Caco-2 (cell line): ENCODE measurements at regions of chr6 and their contacts with region 1.

Region 1: DNA sequence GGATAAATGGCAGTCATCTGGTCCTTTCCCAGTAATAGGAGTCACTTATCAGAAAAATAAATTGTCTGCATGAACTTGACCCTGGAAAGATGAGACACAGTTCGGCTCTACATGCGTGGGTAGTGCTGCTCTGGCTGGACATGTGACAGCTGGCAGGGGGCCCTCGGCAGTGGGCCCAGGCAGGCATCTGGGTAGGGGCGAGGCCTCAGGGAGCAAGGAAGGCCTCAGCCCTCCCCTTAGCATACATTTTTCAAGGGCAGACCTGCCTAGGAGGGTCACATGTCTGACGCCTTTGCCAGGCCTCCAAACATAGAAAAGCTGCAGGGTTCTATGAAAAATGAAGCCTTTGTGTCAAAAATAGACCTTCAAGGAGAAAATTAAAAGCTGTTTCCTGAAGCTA is 12.8 kb upstream of the ILRUN start:
- DNase-seq: no peak
- H3K4me3 ChIP-seq: no peak overlapping the region
- H3K4me3 Mint-ChIP-seq: no peak overlapping the region
- H3K27ac Mint-ChIP-seq: no peak overlapping the region
- H3K4me1 ChIP-seq: peaks cover 13% of the 10 kb centered on the region
- H3K4me1 Mint-ChIP-seq: peaks cover 9% of the 10 kb centered on the region
- H3K27me3 ChIP-seq: no peaks in the 10 kb centered on the region
- H3K27me3 Mint-ChIP-seq: no peaks in the 10 kb centered on the region
- CTCF ChIP-seq: no peak

Region 2: GRCh38 chr6:34680802-34681515 is 28.4 kb before region 1 on chr6:
- CTCF ChIA-PET with region 1: no interaction called
- POLR2A ChIA-PET with region 1: interaction called, 10 read pairs
- intact Hi-C with region 1: no loop called
- DNase-seq: no peak
- H3K4me3 ChIP-seq: no peak overlapping the region
- H3K4me3 Mint-ChIP-seq: no peak overlapping the region
- H3K27ac Mint-ChIP-seq: no peak overlapping the region
- H3K4me1 ChIP-seq: peaks cover 23% of the 10 kb centered on the region
- H3K4me1 Mint-ChIP-seq: peaks cover 20% of the 10 kb centered on the region
- H3K27me3 ChIP-seq: no peaks in the 10 kb centered on the region
- H3K27me3 Mint-ChIP-seq: no peaks in the 10 kb centered on the region
- CTCF ChIP-seq: no peak

Region 3: GRCh38 chr6:34829137-34829536 is 119.8 kb after region 1 on chr6:
- CTCF ChIA-PET with region 1: no interaction called
- POLR2A ChIA-PET with region 1: no interaction called
- intact Hi-C with region 1: no loop called
- DNase-seq: no peak
- H3K4me3 ChIP-seq: no peak overlapping the region
- H3K4me3 Mint-ChIP-seq: no peak overlapping the region
- H3K27ac Mint-ChIP-seq: no peak overlapping the region
- H3K4me1 ChIP-seq: no peaks in the 10 kb centered on the region
- H3K4me1 Mint-ChIP-seq: no peaks in the 10 kb centered on the region
- H3K27me3 ChIP-seq: no peaks in the 10 kb centered on the region
- H3K27me3 Mint-ChIP-seq: no peaks in the 10 kb centered on the region
- CTCF ChIP-seq: no peak

Region 4: DNA sequence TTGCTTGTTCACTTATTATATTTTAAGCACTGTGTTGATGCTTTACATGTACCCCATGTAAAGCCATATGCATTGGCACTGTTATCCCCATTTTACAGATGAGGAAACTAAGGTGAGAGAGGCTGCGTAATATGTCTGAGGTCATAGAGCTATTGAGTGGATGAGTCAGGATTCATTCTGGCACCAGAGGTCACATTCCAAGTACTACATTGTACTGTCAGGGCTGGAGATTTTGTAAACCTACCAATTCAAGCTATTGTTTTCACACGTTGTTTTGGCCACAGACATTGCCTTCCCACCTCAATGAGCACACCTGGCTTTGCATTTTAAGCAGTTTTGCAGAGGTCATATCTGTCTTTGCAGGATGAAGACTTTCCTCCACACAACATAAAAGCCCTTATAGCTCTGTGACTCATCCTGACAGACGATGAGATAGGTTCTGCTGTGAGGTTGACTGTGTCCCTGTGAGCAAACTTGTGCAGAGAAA is 212.8 kb after region 1 on chr6:
- CTCF ChIA-PET with region 1: no interaction called
- POLR2A ChIA-PET with region 1: no interaction called
- intact Hi-C with region 1: no loop called
- DNase-seq: no peak
- H3K4me3 ChIP-seq: no peak overlapping the region
- H3K4me3 Mint-ChIP-seq: no peak overlapping the region
- H3K27ac Mint-ChIP-seq: no peak overlapping the region
- H3K4me1 ChIP-seq: no peaks in the 10 kb centered on the region; the same call in 1 of the 2 replicates
- H3K4me1 Mint-ChIP-seq: peaks cover 6% of the 10 kb centered on the region
- H3K27me3 ChIP-seq: no peaks in the 10 kb centered on the region
- H3K27me3 Mint-ChIP-seq: no peaks in the 10 kb centered on the region
- CTCF ChIP-seq: no peak